Aorta (tissue), 5 donors: ENCODE measurements at regions of chr17 and their contacts with region 1.

Region 1: GRCh38 chr17:64572638-64573154 is 65.9 kb downstream of the CEP95 start:
- DNase-seq: no peak
- ATAC-seq: peak; percentile 73
- H3K4me3 ChIP-seq: no peak overlapping the region
- H3K27ac ChIP-seq: no peak overlapping the region
- H3K4me1 ChIP-seq: no peaks in the 10 kb centered on the region
- H3K27me3 ChIP-seq: no peaks in the 10 kb centered on the region

Region 2: DNA sequence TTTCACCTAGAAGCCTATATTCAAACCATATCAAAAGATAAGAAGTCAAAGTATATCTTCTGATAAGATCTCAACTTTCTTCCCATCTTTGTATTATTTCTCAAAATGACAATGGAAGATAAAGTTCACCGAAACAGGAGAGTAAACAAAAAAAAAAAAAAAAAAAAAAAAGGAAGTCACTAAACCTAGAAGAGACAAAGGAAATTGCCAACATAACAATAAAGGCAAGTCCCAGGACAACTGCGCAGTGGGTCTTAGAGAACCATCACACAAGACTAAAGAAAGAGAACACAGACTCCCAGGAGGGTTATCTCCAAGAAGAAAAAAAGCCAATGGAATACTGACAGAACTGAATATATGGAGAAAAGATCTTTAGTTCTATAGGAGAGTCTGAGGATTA is 23.7 kb after region 1 on chr17:
- intact Hi-C with region 1: no loop called
- DNase-seq: no peak
- ATAC-seq: no peak
- H3K4me3 ChIP-seq: no peak overlapping the region
- H3K27ac ChIP-seq: no peak overlapping the region
- H3K4me1 ChIP-seq: no peaks in the 10 kb centered on the region
- H3K27me3 ChIP-seq: no peaks in the 10 kb centered on the region

Region 3: DNA sequence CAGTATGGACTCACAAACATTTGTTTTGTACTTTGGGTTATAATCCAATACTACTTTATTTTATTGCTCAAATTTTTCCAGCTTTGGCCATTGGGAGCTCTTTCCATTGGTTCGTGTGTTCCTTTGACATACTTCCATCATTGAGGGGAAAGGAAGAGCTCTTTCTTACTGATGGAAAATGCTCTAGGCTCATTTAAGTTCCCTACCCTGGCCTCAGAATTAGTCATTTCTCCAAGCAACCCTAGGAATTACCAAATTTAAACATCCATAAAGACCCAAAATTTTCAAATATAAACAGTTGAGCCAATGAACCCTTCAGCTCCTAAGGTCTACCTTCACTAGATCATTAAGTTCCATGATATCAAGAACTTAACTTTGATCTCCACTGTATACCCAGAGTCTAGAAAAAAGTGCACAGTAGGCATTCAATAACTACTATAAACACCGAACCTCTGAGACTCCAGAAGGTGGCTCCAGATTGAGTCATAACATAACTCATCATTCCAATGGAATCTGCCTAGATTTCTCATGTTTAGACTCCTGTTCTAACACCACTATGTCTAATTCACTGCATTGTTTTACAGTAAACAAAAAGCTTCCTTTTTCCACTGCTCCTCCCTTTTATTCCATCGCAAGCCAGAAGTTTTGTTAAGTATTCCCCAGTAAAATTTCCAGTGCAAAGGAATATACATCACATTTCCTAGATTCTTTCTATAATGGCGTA is 50.4 kb after region 1 on chr17:
- intact Hi-C with region 1: loop called in 1 of 2 experiments (anchors 10 kb)
- DNase-seq: no peak
- ATAC-seq: no peak
- H3K4me3 ChIP-seq: no peak overlapping the region
- H3K27ac ChIP-seq: no peak overlapping the region
- H3K4me1 ChIP-seq: peaks cover 0 to 2% of the 10 kb centered on the region in 2 donors
- H3K27me3 ChIP-seq: no peaks in the 10 kb centered on the region